ENCODE measurements at regions of chr13 and their contacts with region 1.

Region 1: GRCh38 chr13:114065141-114065925 is 67.1 kb downstream of the RASA3 start:
- DNase-seq: peak; percentile 94 to 95
- ATAC-seq: peak; percentile 93
- H3K4me3 ChIP-seq: no peak overlapping the region
- H3K27ac ChIP-seq: peak overlapping the region; percentile 79 to 91
- H3K4me1 ChIP-seq: no peaks in the 10 kb centered on the region
- H3K27me3 ChIP-seq: no peaks in the 10 kb centered on the region

Region 2: DNA sequence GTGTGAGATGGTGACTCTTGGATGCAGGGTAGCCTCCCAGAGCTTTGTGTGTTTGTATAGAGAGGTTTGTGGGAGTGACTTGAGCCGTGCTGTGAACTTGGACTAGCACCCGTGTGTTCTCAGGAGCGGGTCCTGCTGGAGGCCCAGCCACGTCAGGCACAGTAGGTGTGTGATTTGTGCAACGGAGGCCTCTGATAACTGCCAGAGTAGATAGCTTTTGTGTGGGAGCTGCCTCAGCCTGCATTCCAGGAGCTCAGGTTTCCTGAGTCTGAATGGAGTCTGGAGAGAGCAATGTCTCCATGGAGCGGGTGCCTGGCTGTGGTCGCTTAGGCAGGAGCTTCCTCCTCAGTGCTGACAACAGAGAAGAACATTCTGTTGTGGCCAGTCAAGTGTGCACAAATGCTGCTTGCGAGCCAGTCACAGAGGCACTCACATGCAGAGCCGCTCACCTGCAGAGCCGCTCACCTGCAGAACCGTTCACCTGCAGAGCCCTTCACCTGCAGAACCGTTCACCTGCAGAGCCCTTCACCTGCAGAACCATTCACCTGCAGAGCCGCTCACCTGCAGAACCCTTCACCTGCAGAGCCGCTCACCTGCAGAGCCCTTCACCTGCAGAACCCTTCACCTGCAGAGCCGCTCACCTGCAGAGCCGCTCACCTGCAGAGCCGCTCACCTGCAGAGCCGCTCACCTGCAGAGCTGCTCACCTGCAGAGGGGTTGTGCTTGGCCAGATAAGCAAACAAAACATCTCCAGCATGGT is 448.2 kb before region 1 on chr13:
- intact Hi-C with region 1: no loop called
- DNase-seq: peak; percentile 47 to 59
- ATAC-seq: no peak
- H3K4me3 ChIP-seq: no peak overlapping the region
- H3K27ac ChIP-seq: no peak overlapping the region
- H3K4me1 ChIP-seq: no peaks in the 10 kb centered on the region
- H3K27me3 ChIP-seq: no peaks in the 10 kb centered on the region

Region 3: DNA sequence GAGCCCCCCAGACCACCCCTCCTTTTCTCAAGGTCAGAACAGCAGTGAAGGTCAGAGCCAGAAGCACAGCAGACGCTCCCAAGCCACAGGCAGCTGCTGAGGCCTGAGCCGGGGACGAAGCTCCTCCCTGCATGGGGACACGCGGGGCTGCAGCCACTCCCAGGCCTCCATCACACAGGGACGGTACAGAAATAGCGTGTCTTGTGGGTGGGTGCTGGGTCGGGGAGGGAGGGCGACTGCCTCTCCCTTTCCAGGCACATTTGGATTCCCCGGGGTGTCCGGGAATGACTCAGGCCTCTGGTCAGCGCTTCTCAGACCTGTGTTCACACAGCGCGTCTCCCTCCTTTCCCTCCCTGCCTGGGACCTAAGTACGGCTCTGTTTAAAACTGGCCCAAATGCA is 33.9 kb after region 1 on chr13:
- intact Hi-C with region 1: loop called (anchors 2 kb)
- DNase-seq: peak; percentile 91 to 95
- ATAC-seq: peak; percentile 86
- H3K4me3 ChIP-seq: no peak overlapping the region
- H3K27ac ChIP-seq: no peak overlapping the region
- H3K4me1 ChIP-seq: no peaks in the 10 kb centered on the region
- H3K27me3 ChIP-seq: no peaks in the 10 kb centered on the region

Region 4: GRCh38 chr13:114132419-114133121 is 67.2 kb after region 1 on chr13 and contains the start of gene RASA3:
- intact Hi-C with region 1: loop called (anchors 2 to 5 kb)
- DNase-seq: peak; percentile 87 to 92
- ATAC-seq: peak; percentile 90
- H3K4me3 ChIP-seq: peak within 1 kb of the TSS; percentile 45 to 79
- H3K27ac ChIP-seq: peak within 1 kb of the TSS in 1 of 2 donors; percentile 38
- H3K4me1 ChIP-seq: no peaks in the 10 kb centered on the region
- H3K27me3 ChIP-seq: no peaks in the 10 kb centered on the region
- total RNA-seq, gene RASA3: 34.8 to 42.3 TPM

Region 5: DNA sequence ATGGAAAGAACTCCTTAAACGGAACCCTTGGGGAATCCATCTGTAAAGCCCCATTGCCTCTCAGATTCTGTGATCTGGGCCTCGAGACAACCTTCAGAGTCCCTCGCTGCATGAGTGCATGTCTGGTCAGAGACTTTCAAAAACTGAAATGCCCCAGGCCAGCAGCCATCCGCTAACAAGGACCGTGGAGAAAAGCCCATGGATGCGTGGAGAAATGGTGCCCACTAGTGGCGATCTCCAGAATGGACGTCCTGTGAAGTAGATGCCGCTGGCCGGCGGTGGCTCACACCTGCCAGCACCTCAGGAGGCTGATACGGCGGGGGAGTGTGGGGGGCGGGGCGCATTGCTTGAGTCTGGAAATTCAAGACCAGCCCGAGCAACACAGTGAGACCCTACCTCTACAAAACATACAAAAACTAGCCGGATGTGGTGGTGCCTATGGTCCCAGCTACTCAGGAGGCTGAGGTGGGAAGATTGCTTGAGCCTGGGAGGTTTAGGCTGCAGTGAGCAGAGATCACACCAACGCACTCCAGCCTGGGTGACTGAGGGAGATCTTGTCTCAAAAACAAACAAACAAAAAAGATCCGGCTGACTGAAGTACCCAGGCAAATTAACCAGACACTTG is 161.5 kb after region 1 on chr13:
- intact Hi-C with region 1: loop called in 1 of 2 experiments (anchors 5 kb)
- DNase-seq: peak; percentile 89 to 94
- ATAC-seq: peak; percentile 94
- H3K4me3 ChIP-seq: no peak overlapping the region
- H3K27ac ChIP-seq: no peak overlapping the region
- H3K4me1 ChIP-seq: no peaks in the 10 kb centered on the region
- H3K27me3 ChIP-seq: no peaks in the 10 kb centered on the region

Region 6: GRCh38 chr13:114268344-114269280 is 203.3 kb after region 1 on chr13:
- intact Hi-C with region 1: no loop called
- DNase-seq: no peak
- ATAC-seq: no peak
- H3K4me3 ChIP-seq: no peak overlapping the region
- H3K27ac ChIP-seq: no peak overlapping the region
- H3K4me1 ChIP-seq: no peaks in the 10 kb centered on the region
- H3K27me3 ChIP-seq: no peaks in the 10 kb centered on the region

Measured in aorta (tissue), 5 donors.